Ovary (tissue), 10 donors: ENCODE measurements at regions of chr6 and their contacts with region 1.

Region 1: DNA sequence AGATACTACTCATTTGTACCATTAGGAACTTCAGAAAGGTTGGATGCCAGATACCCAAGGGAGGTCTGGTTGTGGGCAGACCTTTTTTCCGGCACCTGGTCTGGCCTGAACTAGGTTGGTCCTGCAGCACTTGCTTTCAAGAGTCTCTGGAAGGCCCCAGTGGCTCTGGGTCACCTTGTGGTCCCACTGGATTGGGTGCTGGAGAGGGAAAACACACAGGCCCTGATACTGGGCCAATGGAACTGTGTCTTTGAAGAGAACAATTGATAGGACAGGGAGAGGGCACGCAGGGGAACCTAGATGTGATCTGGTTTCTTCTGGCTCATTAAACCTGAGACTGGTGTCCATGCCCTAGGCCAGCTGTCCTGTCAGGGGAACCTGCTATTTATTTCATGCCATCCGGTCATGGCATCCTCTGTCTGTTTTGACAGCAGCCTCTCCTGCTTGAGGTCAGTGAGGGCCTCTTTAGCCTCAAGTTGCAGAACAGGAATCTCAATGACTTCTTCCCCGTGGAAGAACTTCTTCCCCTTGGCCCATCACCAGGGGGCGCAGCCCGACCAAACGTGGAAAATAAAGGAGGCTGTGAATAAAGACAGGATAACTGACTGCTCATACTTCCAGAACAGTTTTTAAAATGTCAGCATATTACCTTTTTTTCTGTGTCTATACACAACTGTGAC is 25.0 kb downstream of the TAF8 start:
- DNase-seq: peak; percentile 66 to 87 (median 80)
- H3K4me3 ChIP-seq: no peak overlapping the region
- H3K27ac ChIP-seq: no peak overlapping the region
- H3K4me1 ChIP-seq: no peaks in the 10 kb centered on the region
- H3K27me3 ChIP-seq: no peaks in the 10 kb centered on the region
- CTCF ChIP-seq: peak; percentile 38 to 73 (median 64)
- EP300 ChIP-seq: no peak
- POLR2A ChIP-seq: no peak

Region 2: GRCh38 chr6:42059743-42060142 is 15.6 kb before region 1 on chr6:
- intact Hi-C with region 1: no loop called
- DNase-seq: no peak
- H3K4me3 ChIP-seq: no peak overlapping the region
- H3K27ac ChIP-seq: no peak overlapping the region
- H3K4me1 ChIP-seq: no peaks in the 10 kb centered on the region
- H3K27me3 ChIP-seq: no peaks in the 10 kb centered on the region
- CTCF ChIP-seq: no peak
- EP300 ChIP-seq: no peak
- POLR2A ChIP-seq: no peak

Region 3: GRCh38 chr6:42158011-42158410 is 82.7 kb after region 1 on chr6:
- intact Hi-C with region 1: loop called in 3 of 4 experiments (anchors 5 to 10 kb)
- DNase-seq: no peak
- H3K4me3 ChIP-seq: no peak overlapping the region
- H3K27ac ChIP-seq: no peak overlapping the region
- H3K4me1 ChIP-seq: no peaks in the 10 kb centered on the region
- H3K27me3 ChIP-seq: no peaks in the 10 kb centered on the region
- CTCF ChIP-seq: no peak
- EP300 ChIP-seq: no peak
- POLR2A ChIP-seq: no peak

Region 4: DNA sequence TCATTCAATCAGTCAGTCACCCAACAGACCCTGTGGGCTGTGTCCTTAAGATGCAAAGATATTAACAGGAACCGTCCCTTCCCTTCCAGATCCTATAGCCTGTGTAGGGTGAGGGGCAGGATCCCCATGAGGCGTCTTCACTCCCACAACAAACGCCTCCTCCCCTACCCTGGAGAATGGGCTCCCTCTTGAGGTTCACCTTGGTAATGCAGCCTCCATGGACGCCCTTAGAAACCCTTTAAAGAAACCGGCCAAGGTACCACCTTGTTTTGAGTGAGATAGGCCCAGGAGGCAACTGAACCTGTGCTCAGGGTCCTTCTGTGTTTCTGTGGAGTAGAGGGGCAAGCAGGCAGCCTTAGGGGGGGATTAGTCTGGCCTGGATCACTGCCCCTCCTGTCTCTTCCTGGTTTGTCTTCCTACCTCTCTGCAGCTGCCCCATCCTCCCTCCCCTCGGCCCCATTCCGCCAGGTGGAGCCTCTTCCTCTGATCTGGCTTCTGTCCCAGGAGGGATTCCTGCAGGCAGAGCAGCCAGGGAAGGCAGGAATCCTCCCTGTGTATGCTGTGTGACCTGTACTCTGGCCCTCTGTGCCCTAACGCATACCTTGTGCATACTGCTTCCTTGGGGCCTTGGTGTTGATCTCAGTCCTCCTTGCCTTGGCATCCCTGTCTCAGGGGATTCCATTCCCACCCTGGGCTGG is 91.3 kb after region 1 on chr6:
- intact Hi-C with region 1: loop called in 3 of 4 experiments (anchors 5 to 10 kb)
- DNase-seq: peak; percentile 37 to 71 (median 59)
- H3K4me3 ChIP-seq: no peak overlapping the region
- H3K27ac ChIP-seq: no peak overlapping the region
- H3K4me1 ChIP-seq: no peaks in the 10 kb centered on the region
- H3K27me3 ChIP-seq: no peaks in the 10 kb centered on the region
- CTCF ChIP-seq: peak; percentile 46 to 78 (median 66)
- EP300 ChIP-seq: no peak
- POLR2A ChIP-seq: no peak

Region 5: GRCh38 chr6:42224222-42224989 is 149.1 kb after region 1 on chr6:
- intact Hi-C with region 1: no loop called
- DNase-seq: no peak
- H3K4me3 ChIP-seq: no peak overlapping the region
- H3K27ac ChIP-seq: no peak overlapping the region
- H3K4me1 ChIP-seq: no peaks in the 10 kb centered on the region
- H3K27me3 ChIP-seq: no peaks in the 10 kb centered on the region
- CTCF ChIP-seq: no peak
- EP300 ChIP-seq: no peak
- POLR2A ChIP-seq: no peak

Region 6: GRCh38 chr6:42547407-42548329 is 472.4 kb after region 1 on chr6:
- intact Hi-C with region 1: loop called in 3 of 4 experiments (anchors 10 kb)
- DNase-seq: peak; percentile 74 to 89 (median 81)
- H3K4me3 ChIP-seq: peak overlapping the region; percentile 31
- H3K27ac ChIP-seq: no peak overlapping the region
- H3K4me1 ChIP-seq: peaks cover 2% of the 10 kb centered on the region
- H3K27me3 ChIP-seq: no peaks in the 10 kb centered on the region
- CTCF ChIP-seq: peak; percentile 84 to 91 (median 89)
- EP300 ChIP-seq: no peak
- POLR2A ChIP-seq: peak; percentile 17